ENCODE measurements at regions of chr18 and their contacts with region 1.

Region 1: DNA sequence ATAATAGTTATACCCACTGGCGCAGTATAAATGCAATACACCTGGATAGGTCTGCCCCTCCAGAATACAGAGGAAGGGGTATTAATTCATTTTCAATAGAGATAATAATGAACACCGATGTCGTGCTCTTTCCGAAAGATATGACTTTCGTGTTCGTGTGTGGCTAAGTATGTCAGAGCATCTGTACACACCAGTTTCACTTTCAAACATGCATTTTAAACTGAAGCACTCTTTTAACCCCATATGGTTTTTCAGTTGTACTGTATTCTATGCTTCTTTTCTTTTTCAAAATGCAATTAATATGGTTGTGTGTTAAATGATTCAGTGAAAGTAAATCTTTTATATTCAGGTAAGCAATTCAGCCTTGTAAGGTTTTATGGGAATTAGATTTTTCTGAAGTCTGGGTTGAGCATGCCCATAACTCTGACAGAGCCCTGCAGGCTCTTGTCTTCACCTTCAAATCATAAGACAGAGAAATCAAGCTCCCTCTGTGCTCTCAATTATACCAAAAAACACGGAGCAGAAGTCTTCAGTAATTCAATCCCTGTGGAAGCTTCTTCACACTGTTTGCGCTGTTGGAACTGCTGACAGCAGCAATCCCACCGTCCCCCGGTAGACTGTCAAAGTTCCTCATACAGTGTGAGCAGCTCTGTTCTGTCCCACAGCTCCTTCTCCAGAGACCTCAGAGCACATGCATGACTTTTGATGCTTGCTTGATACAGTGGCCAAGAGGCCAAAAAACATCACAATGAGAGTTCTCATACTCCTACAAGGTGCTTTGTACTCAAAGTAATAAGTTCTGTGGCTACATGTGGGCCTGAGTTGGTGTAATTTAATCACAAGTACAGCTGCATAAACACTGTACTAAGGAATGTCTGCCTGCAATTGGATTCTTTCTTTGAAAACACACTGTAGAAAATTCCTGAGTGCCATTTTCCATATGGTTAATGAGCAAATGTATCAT is 186.8 kb downstream of the ZNF521 start:
- DNase-seq: peak; percentile 84
- ATAC-seq: peak; percentile 83
- H3K4me3 ChIP-seq: peak overlapping the region; percentile 29; the same call in 1 of the 2 replicates
- H3K27ac ChIP-seq: peak overlapping the region; percentile 92
- H3K4me1 ChIP-seq: peaks cover 16% of the 10 kb centered on the region
- H3K27me3 ChIP-seq: no peaks in the 10 kb centered on the region
- CTCF ChIP-seq: no peak
- POLR2A ChIP-seq: no peak
- RAD21 ChIP-seq: no peak

Region 2: GRCh38 chr18:25230658-25231326 is 65.7 kb after region 1 on chr18:
- CTCF ChIA-PET with region 1: no interaction called
- POLR2A ChIA-PET with region 1: no interaction called
- dilution Hi-C with region 1: no loop called
- in situ Hi-C with region 1: no loop called
- intact Hi-C with region 1: loop called (anchors 2 kb)
- DNase-seq: peak; percentile 90
- ATAC-seq: peak; percentile 83
- H3K4me3 ChIP-seq: peak overlapping the region; percentile 11; the same call in 1 of the 2 replicates
- H3K27ac ChIP-seq: peak overlapping the region; percentile 84
- H3K4me1 ChIP-seq: peaks cover 13% of the 10 kb centered on the region
- H3K27me3 ChIP-seq: no peaks in the 10 kb centered on the region
- CTCF ChIP-seq: no peak
- POLR2A ChIP-seq: no peak
- RAD21 ChIP-seq: peak; percentile 29

Region 3: GRCh38 chr18:25464227-25464626 is 299.1 kb after region 1 on chr18:
- CTCF ChIA-PET with region 1: no interaction called
- POLR2A ChIA-PET with region 1: no interaction called
- dilution Hi-C with region 1: no loop called
- in situ Hi-C with region 1: no loop called
- intact Hi-C with region 1: loop called (anchors 5 kb)
- DNase-seq: peak; percentile 95
- ATAC-seq: peak; percentile 88
- H3K4me3 ChIP-seq: no peak overlapping the region
- H3K27ac ChIP-seq: peak overlapping the region; percentile 92
- H3K4me1 ChIP-seq: peaks cover 35% of the 10 kb centered on the region
- H3K27me3 ChIP-seq: no peaks in the 10 kb centered on the region
- CTCF ChIP-seq: no peak
- POLR2A ChIP-seq: no peak
- RAD21 ChIP-seq: no peak